ENCODE measurements at regions of chr11 and their contacts with region 1.

Region 1: GRCh38 chr11:85647604-85648299 is at the start of gene TMEM126A:
- DNase-seq: peak; percentile 91
- ATAC-seq: peak; percentile 99
- H3K4me3 ChIP-seq: peak within 1 kb of the TSS; percentile 79 to 87 (median 85)
- H3K4me3 Mint-ChIP-seq: peak within 1 kb of the TSS; percentile 89
- H3K27ac ChIP-seq: peak within 1 kb of the TSS; percentile 71 to 91
- H3K27ac Mint-ChIP-seq: peak within 1 kb of the TSS; percentile 93
- H3K4me1 ChIP-seq: peaks cover 12 to 13% of the 10 kb centered on the region in 2 donors
- H3K4me1 Mint-ChIP-seq: peaks cover 18% of the 10 kb centered on the region
- H3K27me3 ChIP-seq: peaks cover 0 to 12% (median 4%) of the 10 kb centered on the region in 4 experiments
- H3K27me3 Mint-ChIP-seq: peaks cover 19% of the 10 kb centered on the region
- CTCF ChIP-seq: no peak
- total RNA-seq, gene TMEM126A: 13.0 and 15.8 TPM in 2 replicates

Region 2: DNA sequence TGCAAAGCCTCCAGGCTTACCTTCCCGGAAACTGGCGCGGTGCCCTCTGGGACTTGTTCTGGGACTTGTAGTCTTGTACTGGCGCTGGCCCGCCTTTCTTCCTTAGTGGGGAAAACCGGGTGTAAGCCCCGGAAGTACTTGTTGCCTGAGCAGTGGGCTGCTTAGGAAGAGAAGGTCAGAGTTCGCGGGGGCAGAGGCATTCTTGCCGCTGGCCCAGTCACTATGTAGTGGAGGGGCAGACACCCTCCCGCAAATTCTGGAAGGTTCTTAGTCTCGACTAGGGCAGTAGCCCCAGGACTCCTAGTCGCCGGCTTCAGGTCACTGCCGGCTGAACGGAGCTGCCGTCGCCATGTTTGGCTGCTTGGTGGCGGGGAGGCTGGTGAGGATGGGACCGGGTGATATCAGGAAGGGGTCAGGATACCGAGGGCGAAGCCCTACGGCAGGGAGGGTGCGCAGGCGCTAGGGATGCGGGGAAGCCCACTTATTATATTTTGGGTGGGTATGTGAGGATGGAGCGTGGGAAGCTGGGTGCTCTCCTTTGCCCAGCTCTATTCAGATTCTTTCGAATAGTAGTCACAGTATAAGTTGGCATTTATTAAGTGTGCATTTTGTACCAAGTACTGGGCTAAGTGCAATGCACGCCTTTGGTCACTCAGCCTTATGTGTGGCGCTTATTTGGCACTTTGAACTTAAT is 654.5 kb after region 1 on chr11 and contains the start of gene HIKESHI:
- CTCF ChIA-PET with region 1: no interaction called
- POLR2A ChIA-PET with region 1: no interaction called
- intact Hi-C with region 1: loop called (anchors 1 kb)
- DNase-seq: peak; percentile 90
- ATAC-seq: peak; percentile 99
- H3K4me3 ChIP-seq: peak within 1 kb of the TSS; percentile 70 to 96 (median 92)
- H3K4me3 Mint-ChIP-seq: peak within 1 kb of the TSS; percentile 98
- H3K27ac ChIP-seq: peak within 1 kb of the TSS; percentile 70 to 95
- H3K27ac Mint-ChIP-seq: peak within 1 kb of the TSS; percentile 95
- H3K4me1 ChIP-seq: peaks cover 10 to 13% of the 10 kb centered on the region in 2 donors
- H3K4me1 Mint-ChIP-seq: peaks cover 20% of the 10 kb centered on the region
- H3K27me3 ChIP-seq: no peaks in the 10 kb centered on the region
- H3K27me3 Mint-ChIP-seq: no peaks in the 10 kb centered on the region
- CTCF ChIP-seq: no peak
- total RNA-seq, gene HIKESHI: 23.3 and 24.4 TPM in 2 replicates

Measured in B cell (primary cell).